ENCODE measurements at regions of chr13 and their contacts with region 1.

Region 1: DNA sequence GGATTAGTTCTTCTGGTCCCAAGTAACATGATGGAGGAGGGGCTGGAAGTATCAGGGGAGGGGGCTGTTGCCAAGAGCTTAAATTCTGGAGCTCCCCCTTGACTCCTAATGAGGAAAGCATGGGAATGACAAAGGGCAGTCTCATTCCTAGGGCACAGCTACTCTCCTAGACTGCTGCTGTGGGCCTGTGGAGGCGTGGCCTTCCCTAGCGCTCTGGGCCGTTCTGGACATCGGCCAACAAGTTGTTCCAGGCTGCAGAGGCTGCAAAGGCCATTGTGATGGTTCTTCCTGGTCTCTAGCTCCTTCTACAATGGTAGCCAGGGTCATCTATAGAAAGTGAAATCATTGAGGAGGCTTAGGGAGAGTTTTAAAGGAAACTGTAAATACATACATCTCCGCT is 916.6 kb downstream of the DIAPH3 start:
- DNase-seq: no peak
- H3K4me3 ChIP-seq: no peak overlapping the region
- H3K27ac ChIP-seq: no peak overlapping the region
- H3K4me1 ChIP-seq: no peaks in the 10 kb centered on the region
- H3K27me3 ChIP-seq: no peaks in the 10 kb centered on the region; the same call in 1 of the 2 replicates
- CTCF ChIP-seq: no peak

Region 2: GRCh38 chr13:59300355-59301173 is 53.4 kb after region 1 on chr13:
- CTCF ChIA-PET with region 1: no interaction called
- POLR2A ChIA-PET with region 1: no interaction called
- intact Hi-C with region 1: loop called (anchors 2 kb)
- DNase-seq: no peak
- H3K4me3 ChIP-seq: no peak overlapping the region
- H3K27ac ChIP-seq: no peak overlapping the region
- H3K4me1 ChIP-seq: no peaks in the 10 kb centered on the region
- H3K27me3 ChIP-seq: no peaks in the 10 kb centered on the region
- CTCF ChIP-seq: no peak

Measured in PC-9 (cell line).